Activated CD8-positive, alpha-beta memory T cell treated with anti-CD3 and anti-CD28 coated beads, Interleukin-2, amount 10 ng/mL, durations not matched to agents 7 days and 5 days (primary cell): ENCODE measurements at regions of chr19 and their contacts with region 1.

Region 1: DNA sequence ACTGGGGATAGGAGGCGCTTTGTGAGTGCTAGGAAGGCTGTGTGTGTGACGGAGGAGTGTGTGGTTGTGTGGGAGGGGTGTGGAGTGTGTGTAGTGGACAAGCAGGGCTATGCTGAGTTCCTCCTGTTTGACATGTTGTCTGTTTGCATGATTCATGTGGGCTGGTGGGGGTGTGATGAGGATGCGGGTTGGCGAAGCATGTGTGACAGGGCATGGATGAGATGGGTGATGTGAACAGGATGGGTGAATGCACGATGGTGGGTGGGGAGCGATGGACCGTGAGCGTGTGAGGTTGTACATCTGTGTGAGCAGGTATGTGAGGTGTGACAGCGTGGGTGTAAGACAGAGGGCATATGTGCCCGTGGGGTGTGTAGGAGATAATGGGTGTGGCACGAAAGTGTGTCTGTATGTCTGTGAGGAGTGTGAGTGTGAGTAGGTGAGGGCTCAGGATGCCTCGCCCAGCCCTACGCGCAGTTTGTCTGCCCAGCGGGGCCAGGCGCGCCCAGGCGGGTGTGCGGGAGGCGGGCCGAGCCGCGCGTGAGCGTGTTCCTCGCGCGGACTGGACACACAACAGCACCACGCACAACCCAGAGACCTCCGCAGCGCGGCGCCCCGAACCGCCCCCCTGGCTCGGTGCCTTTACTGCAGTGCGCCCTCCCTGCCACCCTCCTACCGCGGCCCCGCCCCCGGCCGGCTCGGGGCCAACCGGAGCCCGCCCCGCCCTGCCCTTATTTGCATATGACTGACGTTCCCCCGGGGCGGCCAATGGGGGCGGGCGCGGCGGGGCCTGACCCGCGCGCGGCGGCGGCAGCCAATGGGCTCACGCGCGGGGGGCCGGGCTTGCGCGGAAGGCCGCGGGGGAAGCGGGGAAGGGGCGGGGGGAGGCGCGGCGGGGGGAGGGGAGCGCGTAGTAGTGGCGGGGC is 14.4 kb downstream of the CIC start:
- DNase-seq: peak; percentile 97
- ATAC-seq: peak; percentile 71
- H3K4me3 Mint-ChIP-seq: no peak overlapping the region
- H3K27ac Mint-ChIP-seq: no peak overlapping the region
- H3K4me1 Mint-ChIP-seq: peaks cover 32% of the 10 kb centered on the region
- H3K27me3 Mint-ChIP-seq: no peaks in the 10 kb centered on the region

Region 2: DNA sequence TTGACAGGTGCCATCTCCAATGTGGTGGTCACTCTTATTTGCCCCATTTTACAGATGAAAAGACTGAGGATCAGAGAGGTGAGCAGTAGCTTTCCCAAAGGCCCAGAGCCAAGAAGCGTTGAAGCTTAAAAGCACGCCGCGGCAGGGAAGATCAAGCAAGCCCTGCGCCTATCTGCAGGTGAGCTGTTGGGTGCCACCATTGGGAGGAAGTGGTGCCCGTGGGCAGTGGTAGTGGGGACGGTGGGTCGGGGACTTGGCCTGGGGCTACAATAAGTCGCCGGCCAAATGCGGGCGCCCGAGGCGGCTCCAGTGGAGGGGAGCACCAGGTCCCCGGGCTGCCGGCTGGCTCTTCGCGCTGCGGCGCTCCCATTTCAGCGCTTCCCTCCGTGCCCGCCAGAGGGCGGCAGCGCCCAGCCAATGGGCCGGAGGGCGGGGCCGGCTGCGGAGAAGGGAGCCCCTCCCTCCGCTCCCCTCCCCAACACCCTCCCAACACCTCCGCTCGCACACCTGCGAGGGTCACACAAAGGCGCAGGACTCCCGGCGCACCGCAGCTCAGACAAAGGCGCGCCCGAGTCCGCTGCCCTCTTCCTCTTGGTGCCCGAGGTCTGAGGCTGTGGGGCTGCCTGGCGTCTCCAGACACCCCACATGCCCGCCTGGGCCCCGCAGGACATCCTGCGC is 150.4 kb before region 1 on chr19:
- CTCF ChIA-PET with region 1: interaction called, 26 read pairs
- DNase-seq: peak; percentile 82
- ATAC-seq: peak; percentile 73
- H3K4me3 Mint-ChIP-seq: peak overlapping the region; percentile 70
- H3K27ac Mint-ChIP-seq: peak overlapping the region; percentile 77
- H3K4me1 Mint-ChIP-seq: peaks cover 46% of the 10 kb centered on the region
- H3K27me3 Mint-ChIP-seq: no peaks in the 10 kb centered on the region

Region 3: GRCh38 chr19:42199440-42200115 is 83.8 kb before region 1 on chr19:
- CTCF ChIA-PET with region 1: interaction called, 19 read pairs
- DNase-seq: peak; percentile 94
- ATAC-seq: peak; percentile 70
- H3K4me3 Mint-ChIP-seq: peak overlapping the region; percentile 69
- H3K27ac Mint-ChIP-seq: peak overlapping the region; percentile 96
- H3K4me1 Mint-ChIP-seq: peaks cover 76% of the 10 kb centered on the region
- H3K27me3 Mint-ChIP-seq: no peaks in the 10 kb centered on the region

Region 4: GRCh38 chr19:42244347-42245220 is 38.8 kb before region 1 on chr19:
- CTCF ChIA-PET with region 1: interaction called, 87 read pairs
- DNase-seq: peak; percentile 97
- ATAC-seq: peak; percentile 56
- H3K4me3 Mint-ChIP-seq: peak overlapping the region; percentile 90
- H3K27ac Mint-ChIP-seq: peak overlapping the region; percentile 95
- H3K4me1 Mint-ChIP-seq: peaks cover 30% of the 10 kb centered on the region
- H3K27me3 Mint-ChIP-seq: no peaks in the 10 kb centered on the region

Region 5: DNA sequence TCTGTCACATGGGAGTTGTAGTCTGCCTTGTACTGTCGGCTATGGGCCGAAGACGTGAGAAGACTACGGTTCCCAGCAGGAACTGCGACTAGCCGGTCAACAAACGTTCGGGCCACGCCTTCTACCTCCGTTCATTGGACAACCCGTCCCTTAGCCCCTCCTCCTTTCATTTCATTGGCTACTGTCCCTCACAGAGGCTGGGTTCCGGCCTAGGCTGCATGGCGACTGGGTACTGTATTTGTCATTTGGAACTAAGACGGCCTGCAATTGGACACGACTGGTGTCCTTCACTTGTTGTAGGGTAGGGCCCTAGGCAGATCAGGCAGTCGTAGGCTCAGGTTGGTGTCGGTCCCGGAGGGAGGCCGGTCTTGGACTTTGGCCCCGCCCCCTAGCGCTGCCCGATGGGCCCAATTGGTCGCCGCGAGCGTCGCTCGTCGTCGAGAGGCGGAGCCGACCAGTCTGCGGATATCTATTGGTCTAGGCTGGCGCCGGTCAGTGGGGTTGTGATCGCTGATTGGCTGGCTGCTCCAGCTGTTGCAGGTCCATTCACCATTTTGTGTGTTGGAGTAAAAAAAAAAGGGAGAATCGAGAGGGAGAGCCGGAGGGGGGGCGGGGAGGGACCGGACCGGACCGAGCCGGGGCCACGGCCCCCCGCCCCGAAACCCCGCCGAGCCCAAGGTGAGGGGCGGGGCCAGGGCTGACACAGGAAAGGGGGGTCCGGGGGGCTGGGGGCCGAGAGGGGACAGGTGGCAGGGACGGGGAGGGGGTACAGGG is 14.5 kb before region 1 on chr19 and contains the start of gene CIC:
- CTCF ChIA-PET with region 1: interaction called, 44 read pairs
- DNase-seq: peak; percentile 100
- ATAC-seq: peak; percentile 85
- H3K4me3 Mint-ChIP-seq: no peak within 1 kb of the TSS
- H3K27ac Mint-ChIP-seq: peak within 1 kb of the TSS; percentile 99
- H3K4me1 Mint-ChIP-seq: peaks cover 27% of the 10 kb centered on the region
- H3K27me3 Mint-ChIP-seq: no peaks in the 10 kb centered on the region
- total RNA-seq, gene CIC: 67.3 to 77.3 TPM

Region 6: DNA sequence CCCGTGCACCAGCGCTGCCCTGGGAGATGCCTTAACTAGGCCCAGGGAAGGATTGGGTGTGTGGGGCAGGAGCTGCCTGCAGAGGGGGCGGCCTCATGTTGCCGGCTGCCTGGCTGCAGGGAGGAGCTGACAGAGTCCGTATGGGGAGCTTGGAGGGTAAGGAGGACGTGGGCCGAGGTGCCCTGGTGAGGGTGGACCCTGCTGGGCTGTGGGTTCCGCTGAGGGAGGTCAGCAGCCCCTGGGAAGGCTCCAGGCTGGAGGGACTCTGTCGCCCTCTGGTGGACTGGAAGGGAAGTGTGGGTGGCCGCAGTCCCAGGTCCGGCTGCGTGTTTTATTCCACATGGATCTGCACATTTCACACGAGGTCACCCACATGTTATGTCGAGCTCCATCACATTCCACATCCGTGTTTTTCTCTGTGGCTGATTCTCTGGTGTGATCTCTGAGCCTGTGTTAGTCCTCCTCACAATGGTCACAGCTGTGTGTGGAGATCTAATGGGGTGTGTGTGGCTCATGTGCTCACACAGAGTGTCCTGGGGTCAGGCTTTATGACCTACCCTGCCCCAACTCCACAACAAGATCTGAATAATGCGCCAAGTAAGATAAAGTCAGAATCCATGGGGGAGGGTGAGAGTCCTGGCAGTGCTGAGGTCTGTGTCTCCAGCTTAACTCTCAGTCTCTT is 313.1 kb after region 1 on chr19:
- CTCF ChIA-PET with region 1: no interaction called
- DNase-seq: no peak
- ATAC-seq: peak; percentile 65
- H3K4me3 Mint-ChIP-seq: no peak overlapping the region
- H3K27ac Mint-ChIP-seq: no peak overlapping the region
- H3K4me1 Mint-ChIP-seq: no peaks in the 10 kb centered on the region
- H3K27me3 Mint-ChIP-seq: peaks cover 31% of the 10 kb centered on the region